Activated CD8-positive, alpha-beta T cell treated with anti-CD3 and anti-CD28 coated beads, Interleukin-2, amount 10 ng/mL, durations not matched to agents 7 days and 5 days (primary cell): ENCODE measurements at regions of chr16 and their contacts with region 1.

Region 1: DNA sequence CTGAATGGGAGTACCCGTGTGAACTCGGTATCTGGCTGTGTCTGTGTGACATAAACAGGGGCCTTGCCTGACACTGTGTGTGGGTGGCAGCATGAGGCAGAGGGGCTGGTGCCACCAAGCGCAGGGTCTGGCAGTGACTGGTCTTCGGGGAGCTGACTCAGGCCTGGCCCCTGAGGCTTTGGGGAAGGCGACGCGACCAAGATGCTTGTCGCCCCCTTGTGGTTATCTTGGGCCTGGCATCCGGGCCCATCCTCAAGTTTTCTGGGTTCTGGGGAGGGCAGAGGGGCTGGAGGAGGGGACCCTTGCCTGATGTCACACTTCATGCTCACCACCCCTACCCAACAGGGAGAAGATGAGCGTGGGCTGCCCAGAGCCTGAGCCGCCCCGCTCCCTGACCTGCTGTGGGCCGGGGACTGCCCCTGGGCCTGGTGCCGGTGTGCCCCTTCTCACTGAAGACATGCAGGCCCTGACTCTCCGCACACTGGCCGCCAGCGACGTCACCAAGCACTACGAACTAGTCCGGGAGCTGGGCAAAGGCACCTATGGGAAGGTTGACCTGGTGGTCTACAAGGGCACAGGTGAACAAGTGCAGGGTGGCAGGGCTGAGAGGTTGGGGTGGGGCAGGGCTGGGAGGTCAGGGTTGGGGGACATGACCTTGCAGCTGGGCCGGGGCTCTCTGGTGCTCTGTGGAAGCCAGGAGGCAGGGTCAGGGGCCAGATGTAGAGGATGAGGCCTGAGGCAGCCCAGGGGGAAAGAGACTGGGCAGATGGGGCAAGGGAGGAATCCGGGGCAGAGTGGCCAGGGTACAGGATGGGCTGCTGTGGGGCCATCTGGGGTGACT is 24.9 kb downstream of the SBK1 start:
- DNase-seq: peak; percentile 79
- ATAC-seq: peak; percentile 67
- H3K4me3 Mint-ChIP-seq: no peak overlapping the region
- H3K27ac Mint-ChIP-seq: peak overlapping the region; percentile 68
- H3K4me1 Mint-ChIP-seq: peaks cover 10% of the 10 kb centered on the region
- H3K27me3 Mint-ChIP-seq: no peaks in the 10 kb centered on the region

Region 2: DNA sequence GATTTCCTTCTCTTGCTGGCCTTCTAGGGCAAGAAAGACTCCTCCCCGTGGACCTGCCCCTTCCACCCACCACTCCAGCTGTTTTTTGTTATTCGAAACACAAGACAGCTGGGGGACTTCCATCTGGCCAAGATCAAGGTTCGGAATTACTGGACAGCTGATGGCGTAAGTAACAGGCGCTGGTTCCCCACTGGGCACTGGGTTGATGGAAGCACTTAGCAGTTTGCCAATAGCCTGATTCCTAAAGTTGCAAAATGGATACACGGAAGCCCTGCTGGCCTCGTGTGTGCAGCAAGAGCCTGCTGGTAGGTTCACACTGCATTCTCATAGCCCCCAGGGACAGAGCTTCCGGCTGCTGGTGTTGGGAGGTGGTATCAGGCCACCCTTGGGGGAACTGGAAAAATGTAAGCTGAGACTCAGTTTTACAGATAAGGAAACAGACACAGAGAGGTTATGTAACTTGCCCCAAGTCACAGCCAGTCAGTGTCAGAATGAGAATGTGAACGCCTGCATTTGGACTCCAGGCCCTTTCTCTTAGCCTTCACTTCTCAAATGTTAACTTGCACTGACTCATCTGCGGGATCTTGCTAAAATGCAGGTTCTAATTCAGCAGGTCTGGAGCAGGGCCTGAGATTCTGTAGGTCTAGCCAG is 595.6 kb before region 1 on chr16:
- CTCF ChIA-PET with region 1: no interaction called
- POLR2A ChIA-PET with region 1: no interaction called
- DNase-seq: no peak
- ATAC-seq: no peak
- H3K4me3 Mint-ChIP-seq: no peak overlapping the region
- H3K27ac Mint-ChIP-seq: no peak overlapping the region
- H3K4me1 Mint-ChIP-seq: no peaks in the 10 kb centered on the region
- H3K27me3 Mint-ChIP-seq: no peaks in the 10 kb centered on the region

Region 3: DNA sequence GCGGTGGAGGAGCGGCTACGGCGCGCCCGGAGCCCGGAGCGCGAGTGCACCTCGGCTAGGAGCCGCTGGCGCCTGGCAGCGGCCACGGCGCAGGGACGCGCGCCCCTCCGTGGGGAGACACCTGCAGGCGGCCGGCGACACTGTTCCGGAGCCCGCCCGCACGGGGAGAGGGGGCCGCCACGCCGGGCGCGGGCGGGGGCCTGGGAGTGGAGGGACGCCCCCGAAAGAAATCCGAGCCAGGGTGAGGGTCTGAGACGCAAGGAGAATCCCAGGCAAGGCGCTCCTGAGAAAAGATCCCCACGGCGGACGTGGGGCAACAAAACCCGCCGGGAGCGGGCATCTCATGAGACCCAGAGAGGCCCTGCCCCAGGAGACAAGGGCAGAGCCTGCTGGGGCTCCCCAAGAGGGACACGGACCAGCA is 253.6 kb before region 1 on chr16 and contains the start of gene GSG1L:
- CTCF ChIA-PET with region 1: no interaction called
- POLR2A ChIA-PET with region 1: no interaction called
- DNase-seq: no peak
- ATAC-seq: peak; percentile 75
- H3K4me3 Mint-ChIP-seq: peak within 1 kb of the TSS; percentile 28
- H3K27ac Mint-ChIP-seq: no peak within 1 kb of the TSS
- H3K4me1 Mint-ChIP-seq: peaks cover 2% of the 10 kb centered on the region
- H3K27me3 Mint-ChIP-seq: peaks cover 47% of the 10 kb centered on the region
- total RNA-seq, gene GSG1L: 0.08 to 0.39 TPM

Region 4: DNA sequence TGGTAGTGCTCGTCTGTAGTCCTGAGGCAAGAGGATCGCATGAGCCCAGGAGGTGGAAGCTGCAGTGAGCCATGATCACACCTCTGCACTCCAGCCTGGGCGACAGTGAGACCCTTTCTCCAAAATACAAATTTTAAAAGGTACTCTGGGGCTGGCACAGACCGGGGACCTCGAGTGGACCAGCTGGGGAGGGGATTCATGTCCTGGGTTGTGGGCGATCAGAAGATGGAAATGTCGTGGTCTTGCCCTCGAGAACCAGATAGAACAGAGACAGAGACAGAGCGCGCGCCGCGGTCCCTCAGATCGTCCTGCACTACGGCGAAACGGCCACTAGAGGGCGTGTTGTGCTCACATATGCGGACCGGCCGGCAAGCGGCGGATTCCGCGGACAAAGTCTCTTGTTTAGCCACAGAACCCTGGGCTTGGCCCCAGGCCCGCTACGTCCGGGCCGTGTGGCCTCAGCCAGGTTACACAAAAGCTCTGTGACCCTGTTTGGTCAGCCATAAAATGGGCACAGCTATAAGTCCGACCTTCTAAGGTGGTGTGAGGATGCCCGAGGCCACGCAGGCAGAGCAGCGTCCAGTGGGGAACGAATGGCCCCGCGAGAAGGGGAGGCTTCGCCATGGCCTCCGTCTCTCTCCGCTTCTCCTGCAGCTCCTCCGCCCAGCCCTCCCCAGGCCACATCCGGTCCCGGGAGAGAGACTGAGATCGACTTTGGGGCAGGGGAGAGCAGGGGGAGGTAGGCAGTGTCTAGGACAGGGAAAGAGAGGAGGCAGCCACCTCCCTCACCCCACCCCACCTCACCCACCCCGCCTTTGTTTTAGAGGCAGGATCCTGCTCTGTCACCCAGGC is 39.5 kb before region 1 on chr16:
- CTCF ChIA-PET with region 1: interaction called, 207 read pairs
- POLR2A ChIA-PET with region 1: interaction called, 6 read pairs
- DNase-seq: peak; percentile 90
- ATAC-seq: peak; percentile 82
- H3K4me3 Mint-ChIP-seq: peak overlapping the region; percentile 68
- H3K27ac Mint-ChIP-seq: peak overlapping the region; percentile 90
- H3K4me1 Mint-ChIP-seq: peaks cover 41% of the 10 kb centered on the region
- H3K27me3 Mint-ChIP-seq: peaks cover 16% of the 10 kb centered on the region

Region 5: GRCh38 chr16:28291873-28292660 is 25.2 kb before region 1 on chr16 and contains the start of gene SBK1:
- CTCF ChIA-PET with region 1: interaction called, 33 read pairs
- POLR2A ChIA-PET with region 1: interaction called, 5 read pairs
- DNase-seq: peak; percentile 84
- ATAC-seq: peak; percentile 97
- H3K4me3 Mint-ChIP-seq: peak within 1 kb of the TSS; percentile 83
- H3K27ac Mint-ChIP-seq: peak within 1 kb of the TSS; percentile 82
- H3K4me1 Mint-ChIP-seq: peaks cover 65% of the 10 kb centered on the region
- H3K27me3 Mint-ChIP-seq: peaks cover 5% of the 10 kb centered on the region
- total RNA-seq, gene SBK1: 10.0 to 10.7 TPM

Region 6: DNA sequence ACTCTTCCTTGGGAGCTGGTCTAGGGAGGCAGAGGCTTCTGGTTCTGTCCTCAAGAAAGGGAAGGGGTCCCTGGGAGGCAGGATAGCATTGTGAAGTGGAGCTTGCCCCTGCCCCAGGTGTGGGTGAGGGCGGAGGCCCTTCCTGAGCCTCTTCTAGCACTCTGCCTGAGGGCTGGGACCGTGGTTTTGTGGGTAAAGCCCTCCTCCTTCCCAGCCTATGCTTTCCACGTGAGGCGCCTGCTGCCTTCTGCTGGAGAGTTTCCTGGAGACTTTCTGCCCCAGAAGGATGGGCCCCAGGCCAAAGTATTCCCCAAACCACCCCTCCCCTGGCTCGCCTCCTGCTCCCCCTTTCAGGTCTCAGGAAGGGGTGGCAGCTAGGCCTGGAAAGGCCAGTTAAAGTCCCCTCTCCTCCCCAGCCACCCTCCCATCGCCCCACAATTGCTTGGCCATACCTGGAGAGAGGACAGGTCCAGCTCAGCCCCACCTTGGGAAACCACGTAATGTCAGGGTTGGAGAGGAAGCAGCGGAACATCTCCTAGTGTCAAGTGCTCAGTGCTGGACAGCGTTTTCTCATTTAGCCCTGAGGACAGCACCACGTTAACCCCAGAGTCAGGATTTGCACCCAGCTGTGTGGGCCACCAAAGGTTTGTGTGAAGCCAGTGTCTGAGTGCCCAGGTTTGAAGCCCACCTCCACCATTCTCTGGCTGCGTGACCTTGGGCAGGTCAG is 19.3 kb before region 1 on chr16:
- CTCF ChIA-PET with region 1: interaction called, 33 read pairs
- POLR2A ChIA-PET with region 1: interaction called, 5 read pairs
- DNase-seq: peak; percentile 58
- ATAC-seq: peak; percentile 34
- H3K4me3 Mint-ChIP-seq: peak overlapping the region; percentile 15
- H3K27ac Mint-ChIP-seq: peak overlapping the region; percentile 84
- H3K4me1 Mint-ChIP-seq: peaks cover 47% of the 10 kb centered on the region
- H3K27me3 Mint-ChIP-seq: peaks cover 5% of the 10 kb centered on the region